ENCODE measurements at regions of chr2 and their contacts with region 1.

Region 1: GRCh38 chr2:224586127-224586695 is 1.0 kb upstream of the CUL3 start:
- DNase-seq: peak in 1 of 35 experiments; percentile 20
- ATAC-seq: no peak
- H3K4me3 ChIP-seq: peak overlapping the region; percentile 66 to 82
- H3K4me3 Mint-ChIP-seq: peak overlapping the region; percentile 87 to 99 (median 92)
- H3K27ac ChIP-seq: peak overlapping the region; percentile 63
- H3K27ac Mint-ChIP-seq: peak overlapping the region; percentile 88 to 90
- H3K4me1 ChIP-seq: peaks cover 17 to 18% of the 10 kb centered on the region in 2 experiments
- H3K4me1 Mint-ChIP-seq: peaks cover 32 to 37% (median 37%) of the 10 kb centered on the region in 3 donors
- H3K27me3 ChIP-seq: no peaks in the 10 kb centered on the region
- H3K27me3 Mint-ChIP-seq: no peaks in the 10 kb centered on the region

Region 2: GRCh38 chr2:224401641-224402342 is 184.4 kb before region 1 on chr2 and contains the start of gene FAM124B:
- CTCF ChIA-PET with region 1: no interaction called
- POLR2A ChIA-PET with region 1: no interaction called
- DNase-seq: peak in 30 of 35 experiments; percentile 0 to 51 (median 11)
- ATAC-seq: peak; percentile 51 to 78 (median 54)
- H3K4me3 ChIP-seq: peak within 1 kb of the TSS; percentile 22 to 55
- H3K4me3 Mint-ChIP-seq: peak within 1 kb of the TSS; percentile 48 to 73 (median 70)
- H3K27ac ChIP-seq: no peak within 1 kb of the TSS
- H3K27ac Mint-ChIP-seq: peak within 1 kb of the TSS in 1 of 2 donors; percentile 79
- H3K4me1 ChIP-seq: peaks cover 0 to 18% of the 10 kb centered on the region in 2 experiments
- H3K4me1 Mint-ChIP-seq: peaks cover 3 to 21% (median 16%) of the 10 kb centered on the region in 3 donors
- H3K27me3 ChIP-seq: peaks cover 0 to 16% of the 10 kb centered on the region in 2 experiments
- H3K27me3 Mint-ChIP-seq: peaks cover 5 to 6% of the 10 kb centered on the region in 2 donors
- total RNA-seq, gene FAM124B: 0.20 to 1.2 (median 0.76) TPM in 4 of 5 donors, not detected in the other

Region 3: GRCh38 chr2:224560549-224560948 is 25.7 kb before region 1 on chr2:
- CTCF ChIA-PET with region 1: no interaction called
- POLR2A ChIA-PET with region 1: interaction called, 7 to 11 read pairs
- DNase-seq: no peak
- ATAC-seq: no peak
- H3K4me3 ChIP-seq: no peak overlapping the region
- H3K4me3 Mint-ChIP-seq: no peak overlapping the region
- H3K27ac ChIP-seq: no peak overlapping the region
- H3K27ac Mint-ChIP-seq: no peak overlapping the region
- H3K4me1 ChIP-seq: peaks cover 6 to 12% of the 10 kb centered on the region in 2 experiments
- H3K4me1 Mint-ChIP-seq: peaks cover 21 to 24% (median 22%) of the 10 kb centered on the region in 3 donors
- H3K27me3 ChIP-seq: no peaks in the 10 kb centered on the region
- H3K27me3 Mint-ChIP-seq: no peaks in the 10 kb centered on the region

Region 4: GRCh38 chr2:225008935-225009334 is 422.7 kb after region 1 on chr2:
- CTCF ChIA-PET with region 1: no interaction called
- POLR2A ChIA-PET with region 1: no interaction called
- DNase-seq: peak in 3 of 35 experiments; percentile 11 to 56 (median 16)
- ATAC-seq: peak in 1 of 4 experiments; percentile 50
- H3K4me3 ChIP-seq: no peak overlapping the region
- H3K4me3 Mint-ChIP-seq: no peak overlapping the region
- H3K27ac ChIP-seq: no peak overlapping the region
- H3K27ac Mint-ChIP-seq: peak overlapping the region in 1 of 2 donors; percentile 70
- H3K4me1 ChIP-seq: peaks cover 13 to 14% of the 10 kb centered on the region in 2 experiments
- H3K4me1 Mint-ChIP-seq: peaks cover 86 to 92% (median 91%) of the 10 kb centered on the region in 3 donors
- H3K27me3 ChIP-seq: no peaks in the 10 kb centered on the region
- H3K27me3 Mint-ChIP-seq: no peaks in the 10 kb centered on the region